Ovary (tissue), 10 donors: ENCODE measurements at regions of chr9 and their contacts with region 1.

Region 1: GRCh38 chr9:33952066-33952465 is 96.6 kb downstream of the UBAP2 start:
- DNase-seq: no peak
- H3K4me3 ChIP-seq: no peak overlapping the region
- H3K27ac ChIP-seq: no peak overlapping the region
- H3K4me1 ChIP-seq: no peaks in the 10 kb centered on the region
- H3K27me3 ChIP-seq: no peaks in the 10 kb centered on the region
- CTCF ChIP-seq: no peak
- EP300 ChIP-seq: no peak
- POLR2A ChIP-seq: no peak

Region 2: GRCh38 chr9:33092634-33093033 is 859.4 kb before region 1 on chr9:
- intact Hi-C with region 1: loop called in 1 of 4 experiments (anchors 10 kb)
- DNase-seq: no peak
- H3K4me3 ChIP-seq: no peak overlapping the region
- H3K27ac ChIP-seq: no peak overlapping the region
- H3K4me1 ChIP-seq: no peaks in the 10 kb centered on the region
- H3K27me3 ChIP-seq: no peaks in the 10 kb centered on the region
- CTCF ChIP-seq: no peak
- EP300 ChIP-seq: no peak
- POLR2A ChIP-seq: no peak

Region 3: GRCh38 chr9:34010979-34011378 is 58.9 kb after region 1 on chr9:
- intact Hi-C with region 1: loop called in 1 of 4 experiments (anchors 10 kb)
- DNase-seq: no peak
- H3K4me3 ChIP-seq: no peak overlapping the region
- H3K27ac ChIP-seq: no peak overlapping the region
- H3K4me1 ChIP-seq: no peaks in the 10 kb centered on the region
- H3K27me3 ChIP-seq: no peaks in the 10 kb centered on the region
- CTCF ChIP-seq: peak in 1 of 3 donors; percentile 23
- EP300 ChIP-seq: no peak
- POLR2A ChIP-seq: no peak

Region 4: GRCh38 chr9:34047864-34048672 is 96.0 kb after region 1 on chr9:
- intact Hi-C with region 1: no loop called
- DNase-seq: peak in 2 of 5 donors; percentile 45 to 64
- H3K4me3 ChIP-seq: peak overlapping the region; percentile 86
- H3K27ac ChIP-seq: peak overlapping the region; percentile 86 to 97
- H3K4me1 ChIP-seq: peaks cover 6% of the 10 kb centered on the region
- H3K27me3 ChIP-seq: no peaks in the 10 kb centered on the region
- CTCF ChIP-seq: no peak
- EP300 ChIP-seq: no peak
- POLR2A ChIP-seq: no peak